Mammary epithelial cell (primary cell): ENCODE measurements at regions of chr6 and their contacts with region 1.

Region 1: GRCh38 chr6:43481075-43481474 is 3.7 kb downstream of the TJAP1 start:
- DNase-seq: peak; percentile 79
- H3K4me3 ChIP-seq: no peak overlapping the region
- H3K27ac ChIP-seq: peak overlapping the region; percentile 62
- H3K4me1 ChIP-seq: peaks cover 50% of the 10 kb centered on the region
- H3K27me3 ChIP-seq: no peaks in the 10 kb centered on the region
- CTCF ChIP-seq: no peak

Region 2: DNA sequence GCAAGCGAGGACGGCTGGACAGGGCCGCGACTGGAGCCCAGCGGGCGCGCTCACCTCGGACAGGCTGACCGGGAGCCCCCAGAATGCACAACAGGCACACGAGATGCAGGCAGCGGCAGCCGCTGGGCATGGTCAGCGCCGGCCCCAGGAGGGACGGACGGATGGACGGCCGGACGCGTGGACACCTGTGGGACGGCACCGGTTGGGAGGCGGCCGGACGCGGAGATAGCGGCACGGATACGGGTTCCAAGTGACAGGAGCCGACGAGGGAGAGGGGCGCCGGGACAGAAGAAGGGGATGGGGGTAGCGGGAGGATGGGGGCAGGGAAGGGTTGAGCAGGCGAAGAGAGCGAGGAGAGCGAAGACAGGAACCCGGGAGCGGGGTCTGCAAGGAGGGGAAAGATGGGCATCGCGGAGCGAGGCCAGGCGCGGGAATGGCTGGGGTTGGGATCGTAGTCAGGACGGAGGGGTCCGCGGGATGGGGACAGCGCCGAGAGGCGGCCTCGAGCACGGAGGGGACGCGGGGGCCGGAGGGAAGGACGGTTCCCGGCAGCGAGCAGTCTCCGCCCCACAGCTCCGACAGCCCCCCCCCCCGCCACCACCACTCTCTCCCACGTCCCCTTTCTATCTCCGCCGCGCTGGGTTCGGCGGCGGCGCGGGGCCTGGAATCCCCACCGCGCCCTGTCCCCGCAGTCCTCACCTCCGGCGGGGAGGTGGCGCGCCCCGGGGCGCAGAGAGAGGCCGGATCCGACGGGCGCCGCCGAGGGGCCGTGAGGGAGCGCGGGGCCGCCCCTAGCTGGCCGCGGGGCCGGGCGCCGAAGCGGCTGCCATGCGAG is 26.2 kb before region 1 on chr6:
- CTCF ChIA-PET with region 1: no interaction called
- dilution Hi-C with region 1: no loop called
- in situ Hi-C with region 1: no loop called
- intact Hi-C with region 1: loop called (anchors 1 kb)
- DNase-seq: no peak
- H3K4me3 ChIP-seq: peak overlapping the region; percentile 53 to 74 (median 62)
- H3K27ac ChIP-seq: no peak overlapping the region
- H3K4me1 ChIP-seq: peaks cover 13% of the 10 kb centered on the region
- H3K27me3 ChIP-seq: no peaks in the 10 kb centered on the region
- CTCF ChIP-seq: no peak

Region 3: GRCh38 chr6:43559328-43559727 is 78.3 kb after region 1 on chr6:
- CTCF ChIA-PET with region 1: no interaction called
- dilution Hi-C with region 1: no loop called
- in situ Hi-C with region 1: no loop called
- intact Hi-C with region 1: no loop called
- DNase-seq: no peak
- H3K4me3 ChIP-seq: no peak overlapping the region
- H3K27ac ChIP-seq: no peak overlapping the region
- H3K4me1 ChIP-seq: no peaks in the 10 kb centered on the region
- H3K27me3 ChIP-seq: no peaks in the 10 kb centered on the region
- CTCF ChIP-seq: no peak